ENCODE measurements at regions of chr3 and their contacts with region 1.

Region 1: DNA sequence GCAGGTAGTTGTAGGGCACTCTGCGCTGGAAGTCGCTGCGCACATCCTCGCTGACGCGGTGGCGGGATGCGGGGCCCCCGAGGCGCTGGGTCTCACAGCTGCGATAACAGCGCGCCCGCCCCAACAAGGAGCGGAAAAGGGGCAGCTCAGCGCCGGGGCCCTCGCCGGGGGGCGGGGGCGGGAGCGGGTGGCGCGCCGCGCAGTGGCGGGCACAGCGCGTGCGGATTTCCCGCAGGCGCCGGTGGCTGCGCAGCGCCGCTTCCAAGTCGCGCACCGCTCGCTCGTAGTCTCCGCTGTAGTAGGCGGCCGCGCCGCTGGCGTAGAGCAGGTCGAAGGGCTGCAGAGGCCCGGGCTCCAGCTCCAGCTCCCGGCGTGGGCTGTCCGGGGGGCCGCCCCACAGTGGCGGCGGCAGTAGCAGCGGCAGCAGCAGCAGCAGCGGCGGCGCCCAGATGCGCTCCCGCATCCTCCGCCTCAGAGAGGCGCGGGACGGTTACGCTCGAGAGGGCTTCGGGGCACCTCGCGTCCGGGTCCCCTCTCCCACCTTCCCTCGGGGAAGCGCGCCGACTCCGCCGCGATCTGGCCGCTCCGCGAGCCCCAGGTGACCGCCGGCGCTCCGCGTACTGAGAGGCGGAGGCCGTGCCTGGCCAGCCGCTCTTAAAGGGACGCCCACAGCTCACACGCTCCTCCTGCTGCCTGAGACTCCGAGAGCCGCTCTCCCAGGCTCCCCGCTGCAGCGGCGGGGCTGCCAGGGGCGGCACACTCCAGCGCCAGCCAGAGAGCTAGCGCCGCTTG is at the start of gene P3H2:
- DNase-seq: peak; percentile 82 to 84
- H3K4me3 ChIP-seq: peak within 1 kb of the TSS; percentile 55 to 76 (median 69)
- H3K27ac ChIP-seq: 0 out of 2 replicates have a peak within 1 kb of the TSS, but pooled peaks have one; percentile 8
- H3K4me1 ChIP-seq: peaks cover 0 to 16% (median 13%) of the 10 kb centered on the region in 4 experiments; a peak in 6 of 7 replicates
- H3K27me3 ChIP-seq: peaks cover 0 to 6% (median 1%) of the 10 kb centered on the region in 4 experiments; a peak in 4 of 7 replicates
- CTCF ChIP-seq: peak in 2 of 3 experiments; percentile 45 to 61; a peak in 3 of 4 replicates
- EP300 ChIP-seq: no peak
- POLR2A ChIP-seq: peak in 1 of 2 experiments; percentile 65; a peak in 1 of 3 replicates
- RAD21 ChIP-seq: peak; percentile 59 to 72
- total RNA-seq, gene P3H2: 40.5 and 48.6 TPM in 2 replicates

Region 2: DNA sequence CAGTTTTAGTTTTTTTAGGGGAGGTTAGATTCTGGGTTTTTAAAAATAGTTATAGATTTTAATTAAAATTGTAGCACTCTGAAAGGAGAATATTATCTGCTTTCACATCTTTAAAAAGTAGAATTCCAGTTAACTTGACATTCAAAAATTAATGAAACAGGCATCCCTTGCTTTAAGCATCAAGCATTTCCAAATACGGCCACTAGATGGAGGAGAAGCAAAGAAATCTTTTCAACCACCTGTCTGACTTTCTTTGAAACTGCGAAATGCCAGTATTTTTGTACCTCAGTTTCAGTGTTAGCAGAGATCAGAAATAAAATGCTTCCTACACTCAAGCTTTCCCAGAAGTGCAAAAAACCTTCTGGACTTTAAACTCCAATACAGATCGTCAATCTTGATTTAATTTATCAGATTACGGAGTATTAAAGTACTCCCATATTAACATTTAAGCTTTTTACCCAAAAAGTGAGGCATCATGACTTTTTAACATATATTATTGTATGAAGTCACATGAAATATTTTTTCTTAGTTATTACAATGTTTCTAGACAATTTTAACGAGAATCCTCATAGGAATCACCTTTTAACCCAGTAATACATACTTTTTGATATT is 153.1 kb before region 1 on chr3:
- CTCF ChIA-PET with region 1: interaction called, 27 read pairs
- POLR2A ChIA-PET with region 1: no interaction called
- DNase-seq: no peak
- H3K4me3 ChIP-seq: no peak overlapping the region
- H3K27ac ChIP-seq: no peak overlapping the region
- H3K4me1 ChIP-seq: peaks cover 0 to under 1% (median 0%) of the 10 kb centered on the region in 4 experiments; a peak in 3 of 7 replicates
- H3K27me3 ChIP-seq: no peaks in the 10 kb centered on the region
- CTCF ChIP-seq: peak in 2 of 3 experiments; percentile 62 to 73; a peak in 2 of 4 replicates
- EP300 ChIP-seq: no peak
- POLR2A ChIP-seq: no peak
- RAD21 ChIP-seq: peak; percentile 89 to 92

Region 3: DNA sequence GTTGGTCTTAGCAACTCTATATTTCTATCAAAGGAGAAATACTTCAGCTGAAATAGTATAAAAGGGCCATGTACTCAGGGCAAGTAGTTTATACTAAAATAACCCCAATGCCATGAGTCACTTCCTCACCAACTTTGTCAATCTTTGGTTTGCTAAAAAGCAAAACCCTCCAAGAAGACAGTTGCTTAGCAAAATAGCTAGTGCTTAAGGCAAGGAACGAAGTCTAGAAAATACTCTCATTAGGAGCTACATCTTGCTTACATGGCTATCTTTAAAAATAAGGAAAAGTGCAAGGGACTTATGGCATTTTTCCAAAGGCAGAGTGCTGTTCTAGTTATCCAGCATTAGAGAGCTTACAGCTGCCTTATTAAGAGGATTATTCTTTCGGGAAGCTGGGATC is 28.2 kb before region 1 on chr3:
- CTCF ChIA-PET with region 1: interaction called, 11 read pairs
- POLR2A ChIA-PET with region 1: no interaction called
- DNase-seq: no peak
- H3K4me3 ChIP-seq: no peak overlapping the region
- H3K27ac ChIP-seq: no peak overlapping the region
- H3K4me1 ChIP-seq: peaks cover 0 to 5% (median under 1%) of the 10 kb centered on the region in 4 experiments; a peak in 3 of 7 replicates
- H3K27me3 ChIP-seq: no peaks in the 10 kb centered on the region
- CTCF ChIP-seq: no peak
- EP300 ChIP-seq: no peak
- POLR2A ChIP-seq: no peak
- RAD21 ChIP-seq: no peak

Region 4: DNA sequence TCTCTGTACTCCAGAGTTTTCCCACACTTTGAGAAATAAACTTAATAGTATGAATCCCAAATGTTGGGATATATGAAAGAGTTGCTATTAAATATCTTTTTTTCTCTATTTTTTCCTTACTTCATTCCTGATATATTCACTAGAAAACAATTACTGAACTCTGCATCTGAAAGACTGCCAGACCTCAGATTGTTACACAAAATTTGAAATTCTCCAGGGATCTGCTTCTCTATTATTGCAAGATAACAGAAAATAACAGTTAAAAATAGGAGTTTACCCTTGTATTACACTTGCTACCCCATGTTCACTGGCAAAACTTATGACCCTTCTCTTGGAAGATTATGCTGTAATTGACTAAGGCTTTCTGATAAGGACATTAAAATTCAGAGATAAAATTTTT is 11.9 kb after region 1 on chr3:
- CTCF ChIA-PET with region 1: interaction called, 10 read pairs
- POLR2A ChIA-PET with region 1: interaction called, 4 read pairs
- DNase-seq: no peak
- H3K4me3 ChIP-seq: no peak overlapping the region
- H3K27ac ChIP-seq: no peak overlapping the region
- H3K4me1 ChIP-seq: peaks cover 0 to 2% (median 0%) of the 10 kb centered on the region in 4 experiments; a peak in 1 of 7 replicates
- H3K27me3 ChIP-seq: no peaks in the 10 kb centered on the region
- CTCF ChIP-seq: no peak
- EP300 ChIP-seq: no peak
- POLR2A ChIP-seq: no peak
- RAD21 ChIP-seq: no peak